Naive thymus-derived CD4-positive, alpha-beta T cell (primary cell): ENCODE measurements at regions of chr15 and their contacts with region 1.

Region 1: GRCh38 chr15:67074886-67075229 is 9.5 kb downstream of the SMAD3 start:
- DNase-seq: no peak
- ATAC-seq: peak; percentile 15
- H3K4me3 ChIP-seq: no peak overlapping the region
- H3K4me3 Mint-ChIP-seq: peak overlapping the region in 9 of 10 donors; percentile 36 to 84 (median 70)
- H3K27ac ChIP-seq: no peak overlapping the region
- H3K27ac Mint-ChIP-seq: peak overlapping the region in 7 of 9 donors; percentile 63 to 91 (median 80)
- H3K4me1 ChIP-seq: peaks cover 50 to 79% of the 10 kb centered on the region in 2 donors
- H3K4me1 Mint-ChIP-seq: peaks cover 34 to 89% (median 76%) of the 10 kb centered on the region in 7 donors
- H3K27me3 ChIP-seq: no peaks in the 10 kb centered on the region
- H3K27me3 Mint-ChIP-seq: no peaks in the 10 kb centered on the region

Region 2: DNA sequence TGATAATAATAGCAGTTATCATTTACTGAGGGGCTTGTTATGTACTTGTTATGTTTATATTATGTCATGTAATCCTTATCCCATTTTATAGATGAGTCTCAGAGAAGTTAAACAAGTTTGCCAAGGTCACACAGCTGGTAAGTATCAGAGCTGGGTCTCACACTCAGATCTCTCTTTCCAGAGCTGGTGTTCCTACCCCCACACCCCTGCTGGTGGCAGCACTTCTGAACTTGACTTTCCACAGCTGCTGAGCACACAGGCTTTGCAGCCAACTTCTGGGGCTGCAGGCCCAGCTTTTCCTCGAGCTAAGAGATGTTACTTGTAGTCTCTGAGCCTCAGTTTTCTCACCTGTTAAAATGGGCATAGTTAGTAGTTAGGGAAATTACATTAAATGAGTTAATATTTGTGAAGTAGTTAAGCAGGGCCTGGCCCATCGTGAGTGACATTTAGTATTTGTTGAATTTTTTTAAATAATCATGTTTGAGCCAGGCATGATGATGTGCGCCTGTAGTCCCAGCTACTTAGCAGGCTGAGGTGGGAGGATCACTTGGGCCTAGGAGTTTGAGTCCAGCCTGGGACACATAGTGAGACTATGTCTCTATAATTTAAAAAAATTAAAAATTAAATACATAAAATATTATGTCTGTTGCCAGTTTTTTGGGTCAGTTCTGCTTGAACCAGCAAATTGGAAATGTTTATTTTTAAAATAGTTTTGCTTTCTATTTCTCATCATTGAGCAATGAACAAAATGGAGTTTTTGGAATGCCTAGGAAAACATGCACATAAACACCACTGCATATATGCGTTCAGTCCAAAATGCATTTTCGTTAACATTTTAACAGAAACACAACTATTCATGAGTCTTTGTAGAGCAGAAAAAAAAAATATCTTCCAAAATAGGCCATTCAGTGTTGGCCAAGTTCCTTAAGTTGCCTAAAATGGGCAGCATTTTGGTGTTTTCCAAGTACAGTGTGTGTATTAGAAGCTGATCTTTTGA is 285.5 kb before region 1 on chr15:
- CTCF ChIA-PET with region 1: no interaction called
- POLR2A ChIA-PET with region 1: no interaction called
- intact Hi-C with region 1: no loop called
- DNase-seq: no peak
- ATAC-seq: no peak
- H3K4me3 ChIP-seq: no peak overlapping the region
- H3K4me3 Mint-ChIP-seq: no peak overlapping the region
- H3K27ac ChIP-seq: no peak overlapping the region
- H3K27ac Mint-ChIP-seq: no peak overlapping the region
- H3K4me1 ChIP-seq: no peaks in the 10 kb centered on the region
- H3K4me1 Mint-ChIP-seq: no peaks in the 10 kb centered on the region
- H3K27me3 ChIP-seq: no peaks in the 10 kb centered on the region
- H3K27me3 Mint-ChIP-seq: peaks cover 0 to 5% (median 0%) of the 10 kb centered on the region in 5 donors

Region 3: DNA sequence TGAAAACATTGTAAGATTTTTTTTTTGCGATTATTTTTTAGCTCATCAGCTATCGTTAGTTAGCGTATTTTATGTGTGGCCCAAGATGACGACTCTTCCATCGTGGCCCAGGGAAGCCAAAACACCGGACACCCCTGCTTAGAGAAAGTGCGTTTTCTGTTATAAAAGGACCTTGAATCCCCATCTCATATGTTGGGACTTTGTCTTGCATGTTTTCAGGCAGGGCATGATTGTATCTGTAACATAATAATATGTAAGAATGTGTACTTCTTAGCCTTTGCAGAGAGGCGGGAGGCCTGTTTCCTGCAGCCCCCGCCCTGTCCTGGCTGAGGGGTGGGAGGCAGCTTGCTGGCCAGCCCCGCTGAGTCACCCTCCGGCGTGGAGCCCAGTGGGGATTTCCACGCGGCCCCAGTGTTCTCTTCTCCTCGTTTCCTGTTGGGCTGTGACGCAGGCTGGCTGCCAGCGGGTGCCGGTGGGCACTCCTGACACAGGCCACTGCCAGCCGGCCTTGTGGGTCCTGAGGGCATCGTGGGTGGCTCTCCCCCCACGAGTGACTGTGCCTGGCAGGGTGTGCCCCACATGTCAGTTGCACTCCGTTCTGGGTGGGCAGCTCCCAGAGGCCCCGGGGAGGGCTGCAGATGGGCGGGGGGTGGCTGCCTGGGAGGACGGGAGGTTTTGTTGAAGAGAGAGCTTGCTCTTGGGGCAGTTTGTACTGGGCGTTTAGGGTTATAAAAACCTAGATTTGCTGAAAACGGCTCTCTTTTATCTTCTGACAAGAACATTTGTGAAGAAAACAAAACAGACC is 46.2 kb after region 1 on chr15:
- CTCF ChIA-PET with region 1: interaction called, 3 read pairs
- POLR2A ChIA-PET with region 1: interaction called, 6 read pairs
- intact Hi-C with region 1: loop called in 1 of 2 experiments (anchors 2 kb)
- DNase-seq: peak; percentile 54 to 90 (median 71)
- ATAC-seq: peak; percentile 93
- H3K4me3 ChIP-seq: peak overlapping the region; percentile 48
- H3K4me3 Mint-ChIP-seq: peak overlapping the region; percentile 78 to 90 (median 84)
- H3K27ac ChIP-seq: peak overlapping the region; percentile 78
- H3K27ac Mint-ChIP-seq: peak overlapping the region; percentile 88 to 97 (median 95)
- H3K4me1 ChIP-seq: peaks cover 58 to 66% of the 10 kb centered on the region in 2 donors
- H3K4me1 Mint-ChIP-seq: peaks cover 53 to 95% (median 82%) of the 10 kb centered on the region in 7 donors
- H3K27me3 ChIP-seq: no peaks in the 10 kb centered on the region
- H3K27me3 Mint-ChIP-seq: no peaks in the 10 kb centered on the region